AG04450 (cell line): ENCODE measurements at regions of chrX and their contacts with region 1.

Region 1: GRCh38 chrX:40653535-40653934 is 6.2 kb upstream of the CXorf38 start:
- DNase-seq: no peak
- H3K4me3 ChIP-seq: no peak overlapping the region
- H3K27ac ChIP-seq: no peak overlapping the region
- H3K27me3 ChIP-seq: no peaks in the 10 kb centered on the region
- CTCF ChIP-seq: no peak

Region 2: DNA sequence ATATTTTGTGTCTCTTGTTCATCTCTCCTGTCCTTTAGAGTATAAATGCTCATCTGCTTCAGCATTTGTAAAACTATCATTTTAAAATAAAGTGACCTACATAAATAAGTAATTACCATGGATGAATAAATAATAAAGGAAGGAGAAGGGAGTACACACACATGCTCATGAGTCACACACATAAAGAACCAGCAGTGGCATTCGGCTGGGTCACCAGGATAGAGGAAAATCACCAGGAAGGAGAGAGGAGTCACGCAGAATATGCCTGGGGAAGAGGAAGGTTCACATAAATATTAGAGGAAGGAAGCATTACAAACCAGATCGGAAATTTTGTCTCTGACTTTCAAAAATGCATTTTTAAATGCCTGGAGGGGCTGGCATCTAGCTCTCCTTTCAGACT is 120.3 kb after region 1 on chrX:
- CTCF ChIA-PET with region 1: no interaction called
- POLR2A ChIA-PET with region 1: no interaction called
- DNase-seq: no peak
- H3K4me3 ChIP-seq: no peak overlapping the region
- H3K27ac ChIP-seq: no peak overlapping the region
- H3K27me3 ChIP-seq: no peaks in the 10 kb centered on the region
- CTCF ChIP-seq: no peak

Region 3: DNA sequence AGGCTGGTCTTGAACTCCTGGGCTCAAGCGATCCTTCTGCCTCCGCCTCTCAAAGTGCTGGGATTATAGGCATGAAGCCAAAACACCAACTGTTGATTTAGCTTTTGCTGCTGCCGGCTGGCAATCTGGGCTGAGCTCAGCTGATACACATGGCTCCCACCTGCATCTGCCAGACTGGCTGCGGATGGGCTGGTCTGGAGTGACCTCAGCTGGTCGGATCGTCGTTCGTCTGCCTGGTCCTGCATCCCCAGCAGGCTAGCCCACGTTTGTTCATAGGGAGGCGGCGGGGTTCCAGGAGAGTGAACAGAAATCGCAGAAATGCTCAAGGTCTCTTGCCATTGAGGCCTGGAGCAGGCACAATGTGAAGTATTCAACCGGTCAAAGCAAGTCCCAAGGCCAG is 606.0 kb after region 1 on chrX:
- CTCF ChIA-PET with region 1: interaction called, 13 read pairs
- POLR2A ChIA-PET with region 1: no interaction called
- DNase-seq: no peak
- H3K4me3 ChIP-seq: no peak overlapping the region
- H3K27ac ChIP-seq: no peak overlapping the region
- H3K27me3 ChIP-seq: no peaks in the 10 kb centered on the region
- CTCF ChIP-seq: no peak